ENCODE measurements at regions of chr11 and their contacts with region 1.

Region 1: DNA sequence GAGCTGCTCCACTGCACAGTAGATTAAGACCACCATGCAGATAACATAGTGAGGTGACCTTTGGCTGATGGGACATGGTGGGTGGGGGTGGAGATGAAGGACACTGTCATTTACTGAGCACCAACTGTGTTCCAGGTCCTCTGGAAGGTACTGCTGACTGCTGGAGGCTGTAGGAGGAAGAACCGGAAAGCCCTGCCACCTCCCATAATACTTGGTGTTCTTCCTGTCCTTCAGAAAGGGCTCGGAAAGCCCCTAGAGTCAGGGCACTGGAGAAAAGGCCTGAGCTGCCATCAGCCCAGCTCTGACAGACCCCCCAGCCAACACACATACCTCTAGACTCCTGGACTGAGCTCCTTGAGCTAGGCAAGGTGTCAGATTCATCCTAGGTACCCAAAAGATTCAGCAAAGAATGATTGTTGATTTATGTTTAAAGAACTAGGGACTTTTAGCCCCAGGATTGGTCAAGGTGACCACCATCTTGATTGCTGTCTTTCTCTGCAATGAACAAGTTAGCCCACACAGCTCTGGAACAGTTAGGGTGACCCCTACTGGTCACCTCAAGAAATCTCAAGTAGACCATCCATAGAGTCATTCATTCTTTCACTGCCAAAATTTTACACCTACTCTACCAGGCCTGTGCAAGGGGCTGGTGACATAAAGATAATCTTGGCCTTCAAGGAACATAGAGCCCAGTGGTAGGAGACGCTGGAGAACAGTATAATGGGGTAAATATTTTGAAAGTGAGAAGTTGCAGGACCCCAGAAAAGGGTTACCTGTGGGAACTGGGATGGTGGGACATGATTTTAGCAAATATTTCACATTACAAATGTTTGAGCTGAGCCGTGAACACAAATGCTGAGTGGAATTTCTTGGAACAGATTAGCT is 39.4 kb downstream of the IRAG1 start:
- DNase-seq: no peak
- H3K4me3 ChIP-seq: no peak overlapping the region
- H3K27ac ChIP-seq: no peak overlapping the region
- H3K4me1 ChIP-seq: peaks cover 5 to 32% of the 10 kb centered on the region in 2 donors
- H3K27me3 ChIP-seq: no peaks in the 10 kb centered on the region
- CTCF ChIP-seq: peak in 4 of 6 experiments; percentile 47 to 57 (median 55)
- POLR2A ChIP-seq: no peak

Region 2: GRCh38 chr11:10405855-10406592 is 248.1 kb before region 1 on chr11:
- intact Hi-C with region 1: loop called (anchors 10 kb)
- DNase-seq: peak; percentile 72 to 76
- H3K4me3 ChIP-seq: no peak overlapping the region
- H3K27ac ChIP-seq: no peak overlapping the region
- H3K4me1 ChIP-seq: no peaks in the 10 kb centered on the region
- H3K27me3 ChIP-seq: no peaks in the 10 kb centered on the region
- CTCF ChIP-seq: peak in 5 of 6 experiments; percentile 42 to 77 (median 73)
- POLR2A ChIP-seq: no peak

Measured in thyroid gland (tissue), 4 donors.